MCF 10A (cell line): ENCODE measurements at regions of chr2 and their contacts with region 1.

Region 1: GRCh38 chr2:11344342-11344955 is at the start of gene ROCK2:
- DNase-seq: peak; percentile 82
- H3K4me3 Mint-ChIP-seq: peak within 1 kb of the TSS; percentile 91
- H3K27ac Mint-ChIP-seq: peak within 1 kb of the TSS; percentile 97
- H3K4me1 Mint-ChIP-seq: peaks cover 7% of the 10 kb centered on the region
- H3K27me3 Mint-ChIP-seq: no peaks in the 10 kb centered on the region
- CTCF ChIP-seq: no peak
- total RNA-seq, gene ROCK2: 40.0 and 40.7 TPM in 2 replicates

Region 2: DNA sequence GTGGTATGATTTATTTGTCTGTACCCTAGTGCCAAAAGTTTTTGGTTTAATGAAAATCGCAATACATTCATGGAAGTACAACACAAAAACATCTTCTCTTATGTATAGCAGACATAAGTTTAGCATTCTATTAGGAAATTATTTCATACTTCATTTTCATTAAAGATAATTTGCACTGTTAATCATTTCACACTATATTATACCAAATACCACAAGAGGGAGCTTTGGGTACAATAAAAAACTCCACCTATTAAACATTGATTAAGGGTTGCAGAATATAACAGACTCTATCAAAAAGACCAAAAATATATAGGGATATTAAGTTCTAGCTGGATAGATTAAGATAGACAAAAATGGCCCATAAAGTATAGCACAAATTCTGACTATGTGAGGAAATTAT is 110.1 kb before region 1 on chr2:
- CTCF ChIA-PET with region 1: interaction called, 7 read pairs
- POLR2A ChIA-PET with region 1: interaction called, 5 read pairs
- intact Hi-C with region 1: loop called (anchors 2 kb)
- DNase-seq: peak; percentile 36
- H3K4me3 Mint-ChIP-seq: no peak overlapping the region
- H3K27ac Mint-ChIP-seq: no peak overlapping the region
- H3K4me1 Mint-ChIP-seq: no peaks in the 10 kb centered on the region
- H3K27me3 Mint-ChIP-seq: no peaks in the 10 kb centered on the region
- CTCF ChIP-seq: peak; percentile 64

Region 3: DNA sequence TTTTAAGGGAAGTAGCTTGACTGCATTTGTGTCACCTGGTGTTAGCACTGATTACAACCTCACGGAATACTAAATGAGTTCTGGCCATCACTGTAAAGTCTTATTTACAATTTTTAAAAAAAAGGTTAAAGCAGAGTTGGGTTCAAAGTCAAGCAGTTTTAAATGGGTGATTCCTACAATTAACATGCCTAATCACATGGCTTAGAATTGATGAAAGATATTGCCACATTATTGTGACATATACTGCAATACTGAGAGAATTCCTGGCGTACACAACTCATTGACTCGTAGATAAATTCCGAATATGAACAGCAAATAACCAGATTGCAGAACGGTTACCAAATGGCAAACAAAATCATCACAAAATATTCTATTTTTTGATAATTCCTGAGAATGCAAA is 34.2 kb before region 1 on chr2:
- CTCF ChIA-PET with region 1: no interaction called
- POLR2A ChIA-PET with region 1: interaction called, 20 read pairs
- intact Hi-C with region 1: no loop called
- DNase-seq: peak; percentile 47
- H3K4me3 Mint-ChIP-seq: peak overlapping the region; percentile 38
- H3K27ac Mint-ChIP-seq: peak overlapping the region; percentile 46
- H3K4me1 Mint-ChIP-seq: peaks cover 24% of the 10 kb centered on the region
- H3K27me3 Mint-ChIP-seq: no peaks in the 10 kb centered on the region
- CTCF ChIP-seq: no peak

Region 4: DNA sequence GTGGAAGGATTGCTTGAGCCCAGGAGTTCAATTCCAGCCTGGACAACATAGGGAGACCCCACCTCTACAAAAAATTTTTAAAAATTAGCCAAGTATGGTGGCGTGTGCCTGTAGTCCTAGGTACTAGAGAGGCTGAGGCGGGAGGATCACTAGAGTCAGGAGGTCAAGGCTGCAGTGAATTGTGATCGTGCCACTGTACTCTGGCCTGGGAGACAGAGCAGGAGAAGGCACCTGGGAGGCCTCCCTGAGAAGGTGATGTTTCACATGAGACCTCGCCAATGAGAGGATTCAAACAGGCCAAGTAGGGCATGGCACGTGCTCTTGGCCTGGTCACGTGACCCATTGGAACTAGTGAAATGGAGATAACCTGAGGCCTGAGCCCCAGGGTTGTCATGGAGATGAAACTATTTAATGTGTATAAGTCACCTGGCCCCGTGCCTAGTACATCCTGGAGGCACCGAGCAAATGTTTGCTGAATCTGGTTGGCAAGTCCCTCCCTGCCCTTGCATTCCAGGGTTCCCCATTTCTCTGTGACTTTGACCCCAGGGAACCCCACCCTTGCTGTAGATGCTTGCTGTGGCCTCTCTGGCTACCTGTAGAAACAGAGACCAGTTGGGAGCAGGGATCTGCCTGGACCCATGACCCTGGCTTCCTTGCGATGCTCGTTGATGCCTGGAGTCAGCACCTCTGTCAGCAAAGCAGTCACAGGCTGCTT is 26.1 kb after region 1 on chr2:
- CTCF ChIA-PET with region 1: interaction called, 6 read pairs
- POLR2A ChIA-PET with region 1: interaction called, 147 read pairs
- intact Hi-C with region 1: no loop called
- DNase-seq: peak; percentile 83
- H3K4me3 Mint-ChIP-seq: no peak overlapping the region
- H3K27ac Mint-ChIP-seq: peak overlapping the region; percentile 68
- H3K4me1 Mint-ChIP-seq: peaks cover 38% of the 10 kb centered on the region
- H3K27me3 Mint-ChIP-seq: no peaks in the 10 kb centered on the region
- CTCF ChIP-seq: no peak

Region 5: GRCh38 chr2:11411768-11412448 is 67.5 kb after region 1 on chr2:
- CTCF ChIA-PET with region 1: interaction called, 7 read pairs
- POLR2A ChIA-PET with region 1: interaction called, 4 read pairs
- intact Hi-C with region 1: loop called (anchors 1 kb)
- DNase-seq: peak; percentile 43
- H3K4me3 Mint-ChIP-seq: no peak overlapping the region
- H3K27ac Mint-ChIP-seq: no peak overlapping the region
- H3K4me1 Mint-ChIP-seq: peaks cover 6% of the 10 kb centered on the region
- H3K27me3 Mint-ChIP-seq: no peaks in the 10 kb centered on the region
- CTCF ChIP-seq: peak; percentile 84

Region 6: DNA sequence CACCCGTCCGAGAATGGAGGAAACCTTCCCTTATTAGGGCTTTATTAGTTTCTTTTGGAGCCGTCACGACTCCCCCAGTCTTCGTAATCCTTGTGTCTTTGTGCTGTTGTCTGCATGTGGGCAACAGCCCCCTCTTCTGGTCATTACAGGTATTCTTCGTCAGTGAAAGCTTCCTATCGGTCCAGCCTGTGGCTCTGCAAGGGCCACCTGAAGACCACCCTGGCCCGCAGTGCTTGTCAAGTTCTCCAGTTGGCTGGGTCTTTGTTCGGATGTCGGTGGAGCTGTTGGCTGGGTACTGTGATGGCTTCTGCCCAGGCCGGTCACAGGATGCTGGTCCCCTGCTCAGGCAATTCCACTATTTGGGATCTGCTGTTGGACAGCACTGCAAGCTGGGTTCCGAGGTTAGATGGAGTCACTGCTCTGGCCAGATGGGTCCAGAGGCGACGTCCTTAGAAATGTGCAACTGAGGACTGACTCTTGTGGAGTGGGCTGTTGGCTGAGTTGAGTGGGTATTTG is 102.3 kb after region 1 on chr2:
- CTCF ChIA-PET with region 1: interaction called, 11 read pairs
- POLR2A ChIA-PET with region 1: no interaction called
- intact Hi-C with region 1: loop called (anchors 2 kb)
- DNase-seq: peak; percentile 72
- H3K4me3 Mint-ChIP-seq: no peak overlapping the region
- H3K27ac Mint-ChIP-seq: no peak overlapping the region
- H3K4me1 Mint-ChIP-seq: no peaks in the 10 kb centered on the region
- H3K27me3 Mint-ChIP-seq: no peaks in the 10 kb centered on the region
- CTCF ChIP-seq: peak; percentile 88